HCT116 (cell line): ENCODE measurements at regions of chr4 and their contacts with region 1.

Region 1: DNA sequence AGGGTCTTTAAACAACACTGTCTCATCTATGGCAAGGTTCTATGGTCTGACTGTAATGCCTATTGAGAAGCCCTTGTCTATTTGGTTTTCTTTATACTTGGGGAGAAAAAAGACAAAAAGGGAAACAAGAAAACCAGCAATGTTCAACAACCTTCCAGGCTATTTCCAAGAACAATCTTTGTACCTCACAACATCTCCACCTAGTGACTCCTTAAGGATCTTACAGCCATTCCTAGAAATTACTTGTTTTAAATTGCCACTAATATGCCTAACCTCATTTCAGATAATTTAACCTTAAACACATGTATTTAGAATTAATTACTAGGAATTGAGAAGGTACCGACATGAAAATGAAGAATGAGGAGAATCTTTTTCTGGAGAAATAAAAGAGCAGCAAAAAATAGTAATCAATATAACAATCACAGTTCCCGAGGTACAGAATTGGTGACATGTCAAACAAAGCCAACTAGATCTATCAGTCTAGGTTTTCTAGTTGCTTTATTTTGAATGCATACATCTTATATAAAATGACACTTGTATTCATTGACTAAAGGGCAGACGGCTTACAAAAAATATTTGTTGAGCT is 1.6 kb upstream of the RBM46 start:
- DNase-seq: peak; percentile 35
- ATAC-seq: peak; percentile 74
- H3K4me3 ChIP-seq: no peak overlapping the region
- H3K27ac ChIP-seq: no peak overlapping the region
- H3K4me1 ChIP-seq: no peaks in the 10 kb centered on the region
- H3K27me3 ChIP-seq: no peaks in the 10 kb centered on the region
- CTCF ChIP-seq: peak; percentile 59 to 89 (median 65)
- POLR2A ChIP-seq: no peak
- RAD21 ChIP-seq: peak; percentile 83

Region 2: GRCh38 chr4:154551872-154552686 is 227.4 kb before region 1 on chr4:
- CTCF ChIA-PET with region 1: no interaction called
- POLR2A ChIA-PET with region 1: no interaction called
- RAD21 ChIA-PET with region 1: no interaction called
- intact Hi-C with region 1: loop called (anchors 2 kb)
- DNase-seq: peak; percentile 79
- ATAC-seq: peak; percentile 66
- H3K4me3 ChIP-seq: no peak overlapping the region
- H3K27ac ChIP-seq: no peak overlapping the region
- H3K4me1 ChIP-seq: peaks cover 2 to 12% of the 10 kb centered on the region in 2 experiments; a peak in 3 of 4 replicates
- H3K27me3 ChIP-seq: no peaks in the 10 kb centered on the region
- CTCF ChIP-seq: peak; percentile 68 to 83 (median 83)
- POLR2A ChIP-seq: no peak
- RAD21 ChIP-seq: peak; percentile 86

Region 3: GRCh38 chr4:154559494-154560418 is 219.7 kb before region 1 on chr4:
- CTCF ChIA-PET with region 1: interaction called, 6 read pairs
- POLR2A ChIA-PET with region 1: no interaction called
- RAD21 ChIA-PET with region 1: no interaction called
- intact Hi-C with region 1: loop called (anchors 2 kb)
- DNase-seq: peak; percentile 44
- ATAC-seq: peak; percentile 95
- H3K4me3 ChIP-seq: no peak overlapping the region
- H3K27ac ChIP-seq: no peak overlapping the region
- H3K4me1 ChIP-seq: no peaks in the 10 kb centered on the region
- H3K27me3 ChIP-seq: no peaks in the 10 kb centered on the region
- CTCF ChIP-seq: peak; percentile 53 to 76 (median 65)
- POLR2A ChIP-seq: no peak
- RAD21 ChIP-seq: peak; percentile 83

Region 4: GRCh38 chr4:154626793-154627484 is 152.5 kb before region 1 on chr4:
- CTCF ChIA-PET with region 1: interaction called, 5 read pairs
- POLR2A ChIA-PET with region 1: no interaction called
- RAD21 ChIA-PET with region 1: no interaction called
- intact Hi-C with region 1: loop called (anchors 2 kb)
- DNase-seq: peak; percentile 63
- ATAC-seq: peak; percentile 96
- H3K4me3 ChIP-seq: peak overlapping the region; percentile 37 to 52
- H3K27ac ChIP-seq: no peak overlapping the region; the same call in 1 of the 2 replicates
- H3K4me1 ChIP-seq: peaks cover 6 to 21% of the 10 kb centered on the region in 2 experiments; a peak in 3 of 4 replicates
- H3K27me3 ChIP-seq: no peaks in the 10 kb centered on the region
- CTCF ChIP-seq: peak; percentile 77 to 98 (median 77)
- POLR2A ChIP-seq: no peak
- RAD21 ChIP-seq: peak; percentile 84

Region 5: GRCh38 chr4:154642373-154643009 is 137.0 kb before region 1 on chr4:
- CTCF ChIA-PET with region 1: interaction called, 14 read pairs
- POLR2A ChIA-PET with region 1: no interaction called
- RAD21 ChIA-PET with region 1: no interaction called
- intact Hi-C with region 1: loop called (anchors 2 kb)
- DNase-seq: no peak
- ATAC-seq: peak; percentile 49
- H3K4me3 ChIP-seq: no peak overlapping the region
- H3K27ac ChIP-seq: no peak overlapping the region
- H3K4me1 ChIP-seq: peaks cover 0 to 7% of the 10 kb centered on the region in 2 experiments; a peak in 2 of 4 replicates
- H3K27me3 ChIP-seq: no peaks in the 10 kb centered on the region
- CTCF ChIP-seq: 0 out of 6 replicates have a peak, but pooled peaks of 1 of the 3 experiments have one; percentile 12
- POLR2A ChIP-seq: no peak
- RAD21 ChIP-seq: peak; percentile 41

Region 6: DNA sequence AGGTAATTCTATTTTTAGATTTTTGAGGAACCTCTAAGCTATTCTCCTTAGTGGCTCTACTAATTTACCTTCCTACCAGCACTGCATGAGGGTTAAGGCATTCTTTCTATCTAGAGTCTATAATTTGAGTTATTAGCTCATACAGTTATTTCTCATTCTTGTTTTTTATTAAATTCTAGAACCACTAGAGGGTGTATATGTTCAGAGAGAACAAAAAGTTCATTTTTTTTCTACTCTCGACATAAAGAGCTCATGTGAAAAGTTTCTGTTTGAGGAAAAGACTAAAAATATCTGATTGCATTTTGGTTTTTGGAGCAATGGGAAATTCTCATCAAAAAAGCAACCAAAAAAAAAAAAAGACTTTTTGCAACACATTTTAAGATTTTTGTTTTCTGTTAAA is 92.6 kb before region 1 on chr4:
- CTCF ChIA-PET with region 1: interaction called, 33 read pairs
- POLR2A ChIA-PET with region 1: no interaction called
- RAD21 ChIA-PET with region 1: interaction called in 1 of 2 experiments, 3 read pairs
- intact Hi-C with region 1: loop called (anchors 2 kb)
- DNase-seq: no peak
- ATAC-seq: no peak
- H3K4me3 ChIP-seq: no peak overlapping the region
- H3K27ac ChIP-seq: no peak overlapping the region
- H3K4me1 ChIP-seq: no peaks in the 10 kb centered on the region
- H3K27me3 ChIP-seq: no peaks in the 10 kb centered on the region
- CTCF ChIP-seq: peak; percentile 7 to 46 (median 26); a peak in 3 of 6 replicates
- POLR2A ChIP-seq: no peak
- RAD21 ChIP-seq: peak; percentile 46

Region 7: DNA sequence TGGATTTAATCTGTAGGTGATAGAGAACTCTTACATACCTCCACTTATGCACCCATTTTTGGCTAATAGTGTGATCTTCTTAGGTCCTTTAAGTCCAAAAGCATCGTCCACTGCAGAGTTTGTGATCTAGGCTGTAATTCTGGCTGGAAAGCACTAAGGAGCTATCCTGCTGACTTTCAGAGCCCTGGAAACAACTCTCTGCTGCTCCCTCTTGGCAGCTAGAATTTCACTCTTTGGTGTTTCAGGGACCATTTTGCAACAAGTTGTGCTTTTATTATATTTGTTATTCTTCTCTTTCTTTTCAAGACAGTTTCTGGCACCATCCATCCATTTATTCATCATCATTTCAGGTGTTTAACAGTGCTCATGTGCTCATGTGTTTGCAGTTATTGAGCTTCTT is 131.6 kb after region 1 on chr4:
- CTCF ChIA-PET with region 1: no interaction called
- POLR2A ChIA-PET with region 1: no interaction called
- RAD21 ChIA-PET with region 1: no interaction called
- intact Hi-C with region 1: no loop called
- DNase-seq: no peak
- ATAC-seq: no peak; the same call in 1 of the 2 replicates
- H3K4me3 ChIP-seq: no peak overlapping the region
- H3K27ac ChIP-seq: no peak overlapping the region
- H3K4me1 ChIP-seq: no peaks in the 10 kb centered on the region
- H3K27me3 ChIP-seq: no peaks in the 10 kb centered on the region
- CTCF ChIP-seq: peak in 2 of 3 experiments; percentile 14 to 22; a peak in 2 of 6 replicates
- POLR2A ChIP-seq: no peak
- RAD21 ChIP-seq: peak; percentile 33; the same call in 1 of the 2 replicates

Region 8: DNA sequence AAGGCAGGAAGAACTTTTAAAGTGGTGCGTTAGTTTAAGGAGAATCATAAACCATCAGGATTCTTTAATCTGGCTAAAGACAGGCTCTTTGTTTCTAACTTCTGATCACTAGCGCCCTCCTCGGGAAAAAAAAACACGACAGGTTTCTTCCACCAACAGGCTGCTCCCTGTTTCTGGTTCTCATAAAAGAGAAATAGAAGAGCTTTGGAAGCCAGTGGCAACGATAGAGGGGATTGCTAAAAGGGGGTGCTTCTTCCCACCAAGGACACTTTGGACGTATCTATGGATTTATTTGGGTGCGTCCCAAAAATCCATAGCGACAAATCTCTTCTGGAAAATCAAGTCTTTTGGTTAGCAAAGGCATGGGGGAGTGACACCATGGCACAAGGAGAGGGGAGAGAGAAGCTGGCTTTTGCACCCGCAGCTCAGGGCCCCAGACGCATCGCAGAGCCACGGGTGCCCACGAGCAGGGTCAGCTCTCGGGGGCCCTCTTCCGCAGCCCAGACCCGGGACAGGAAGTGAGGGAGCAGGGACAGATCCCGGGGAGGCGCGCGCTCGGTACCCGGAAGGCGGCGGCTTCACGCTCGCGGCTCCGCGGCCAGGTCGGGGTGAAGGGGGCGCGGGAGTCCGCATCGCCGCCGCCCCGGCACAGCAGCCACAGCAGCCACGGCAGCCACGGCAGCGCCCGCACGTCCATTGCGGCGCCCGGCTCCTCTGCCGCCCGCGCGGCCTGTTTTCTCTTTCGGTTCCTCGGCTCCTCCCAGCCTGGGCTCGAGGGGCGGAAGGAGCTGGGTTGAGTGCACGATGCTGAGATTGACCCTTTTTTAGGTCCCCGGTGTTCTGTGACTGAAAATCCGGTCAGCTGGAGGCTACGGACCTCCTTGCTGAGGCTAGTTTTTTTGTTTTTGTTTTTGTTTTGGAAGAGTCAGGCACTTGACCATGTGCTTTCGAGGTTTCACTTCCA is 1174.0 kb after region 1 on chr4 and contains the start of gene CTSO:
- CTCF ChIA-PET with region 1: no interaction called
- POLR2A ChIA-PET with region 1: no interaction called
- RAD21 ChIA-PET with region 1: no interaction called
- intact Hi-C with region 1: no loop called
- DNase-seq: peak; percentile 56
- ATAC-seq: peak; percentile 90
- H3K4me3 ChIP-seq: peak within 1 kb of the TSS; percentile 33 to 56
- H3K27ac ChIP-seq: peak within 1 kb of the TSS; percentile 72
- H3K4me1 ChIP-seq: peaks cover 0 to 6% of the 10 kb centered on the region in 2 experiments; a peak in 1 of 4 replicates
- H3K27me3 ChIP-seq: no peaks in the 10 kb centered on the region
- CTCF ChIP-seq: peak; percentile 46 to 66 (median 65)
- POLR2A ChIP-seq: peak; percentile 15
- RAD21 ChIP-seq: peak; percentile 64
- total RNA-seq, gene CTSO: 0.57 TPM